HCT116 (cell line): ENCODE measurements at regions of chr5 and their contacts with region 1.

Region 1: GRCh38 chr5:173331956-173332479 is 3.8 kb upstream of the STC2 start:
- DNase-seq: peak; percentile 77
- ATAC-seq: peak; percentile 57
- H3K4me3 ChIP-seq: no peak overlapping the region
- H3K27ac ChIP-seq: peak overlapping the region; percentile 14; the same call in 1 of the 2 replicates
- H3K4me1 ChIP-seq: peaks cover 14 to 44% of the 10 kb centered on the region in 2 experiments; a peak in 3 of 4 replicates
- H3K27me3 ChIP-seq: no peaks in the 10 kb centered on the region
- CTCF ChIP-seq: peak in 2 of 3 experiments; percentile 94 to 98; a peak in 4 of 6 replicates
- POLR2A ChIP-seq: no peak
- RAD21 ChIP-seq: no peak

Region 2: GRCh38 chr5:172984243-172984953 is 347.6 kb before region 1 on chr5:
- CTCF ChIA-PET with region 1: interaction called, 8 read pairs
- POLR2A ChIA-PET with region 1: interaction called, 5 read pairs
- RAD21 ChIA-PET with region 1: no interaction called
- intact Hi-C with region 1: loop called (anchors 2 kb)
- DNase-seq: peak; percentile 45
- ATAC-seq: peak; percentile 67
- H3K4me3 ChIP-seq: peak overlapping the region; percentile 93 to 94
- H3K27ac ChIP-seq: peak overlapping the region; percentile 73
- H3K4me1 ChIP-seq: peaks cover 5 to 14% of the 10 kb centered on the region in 2 experiments; a peak in 2 of 4 replicates
- H3K27me3 ChIP-seq: no peaks in the 10 kb centered on the region
- CTCF ChIP-seq: peak; percentile 45 to 54 (median 51); a peak in 5 of 6 replicates
- POLR2A ChIP-seq: no peak
- RAD21 ChIP-seq: peak; percentile 70

Region 3: GRCh38 chr5:173293817-173294672 is 38.0 kb before region 1 on chr5:
- CTCF ChIA-PET with region 1: interaction called, 113 read pairs
- POLR2A ChIA-PET with region 1: interaction called, 67 read pairs
- RAD21 ChIA-PET with region 1: interaction called, 15 to 27 read pairs
- intact Hi-C with region 1: loop called (anchors 1 kb)
- DNase-seq: peak; percentile 56
- ATAC-seq: peak; percentile 93
- H3K4me3 ChIP-seq: peak overlapping the region; percentile 10 to 27; a peak in 3 of 4 replicates
- H3K27ac ChIP-seq: no peak overlapping the region
- H3K4me1 ChIP-seq: peaks cover 7 to 20% of the 10 kb centered on the region in 2 experiments; a peak in 3 of 4 replicates
- H3K27me3 ChIP-seq: no peaks in the 10 kb centered on the region
- CTCF ChIP-seq: peak; percentile 77 to 97 (median 89)
- POLR2A ChIP-seq: no peak
- RAD21 ChIP-seq: peak; percentile 99

Region 4: GRCh38 chr5:173303878-173304590 is 28.0 kb before region 1 on chr5:
- CTCF ChIA-PET with region 1: interaction called, 6 read pairs
- POLR2A ChIA-PET with region 1: interaction called, 15 read pairs
- RAD21 ChIA-PET with region 1: no interaction called
- intact Hi-C with region 1: no loop called
- DNase-seq: no peak
- ATAC-seq: peak; percentile 30; the same call in 1 of the 2 replicates
- H3K4me3 ChIP-seq: 0 out of 4 replicates have a peak overlapping the region, but pooled peaks of 1 of the 2 experiments have one; percentile 15
- H3K27ac ChIP-seq: peak overlapping the region; percentile 35
- H3K4me1 ChIP-seq: peaks cover 29 to 37% of the 10 kb centered on the region in 2 experiments
- H3K27me3 ChIP-seq: no peaks in the 10 kb centered on the region
- CTCF ChIP-seq: no peak
- POLR2A ChIP-seq: no peak
- RAD21 ChIP-seq: no peak

Region 5: GRCh38 chr5:173315495-173316350 is 16.3 kb before region 1 on chr5:
- CTCF ChIA-PET with region 1: interaction called, 7 read pairs
- POLR2A ChIA-PET with region 1: interaction called, 65 read pairs
- RAD21 ChIA-PET with region 1: no interaction called
- intact Hi-C with region 1: no loop called
- DNase-seq: no peak
- ATAC-seq: no peak
- H3K4me3 ChIP-seq: no peak overlapping the region
- H3K27ac ChIP-seq: no peak overlapping the region
- H3K4me1 ChIP-seq: peaks cover 0 to 6% of the 10 kb centered on the region in 2 experiments; a peak in 1 of 4 replicates
- H3K27me3 ChIP-seq: no peaks in the 10 kb centered on the region
- CTCF ChIP-seq: no peak
- POLR2A ChIP-seq: no peak
- RAD21 ChIP-seq: no peak

Region 6: DNA sequence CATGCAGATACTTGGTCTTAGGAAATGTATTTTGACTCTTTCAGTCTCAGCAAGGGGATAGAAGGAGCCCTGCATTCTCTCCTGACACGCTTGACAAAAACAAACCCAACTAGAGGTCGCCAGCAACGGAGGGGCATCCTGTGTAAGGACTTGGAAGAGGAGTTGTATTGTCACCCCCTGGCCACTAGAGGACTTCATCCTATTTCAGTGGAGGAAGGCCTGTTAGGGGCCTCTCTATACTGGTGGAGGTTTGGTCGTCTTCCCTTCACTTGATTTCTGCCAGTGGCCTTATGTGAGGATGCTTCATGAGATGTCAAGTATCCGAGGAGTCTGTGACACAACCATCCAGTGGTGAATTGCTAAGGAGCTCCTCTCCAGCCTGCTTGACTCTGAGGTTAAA is 119.0 kb after region 1 on chr5:
- CTCF ChIA-PET with region 1: no interaction called
- POLR2A ChIA-PET with region 1: interaction called, 7 read pairs
- RAD21 ChIA-PET with region 1: no interaction called
- intact Hi-C with region 1: loop called (anchors 5 kb)
- DNase-seq: peak; percentile 60
- ATAC-seq: peak; percentile 39
- H3K4me3 ChIP-seq: no peak overlapping the region
- H3K27ac ChIP-seq: no peak overlapping the region
- H3K4me1 ChIP-seq: peaks cover 43 to 56% of the 10 kb centered on the region in 2 experiments
- H3K27me3 ChIP-seq: no peaks in the 10 kb centered on the region
- CTCF ChIP-seq: peak; percentile 57 to 79 (median 78); a peak in 5 of 6 replicates
- POLR2A ChIP-seq: no peak
- RAD21 ChIP-seq: peak; percentile 46

Region 7: DNA sequence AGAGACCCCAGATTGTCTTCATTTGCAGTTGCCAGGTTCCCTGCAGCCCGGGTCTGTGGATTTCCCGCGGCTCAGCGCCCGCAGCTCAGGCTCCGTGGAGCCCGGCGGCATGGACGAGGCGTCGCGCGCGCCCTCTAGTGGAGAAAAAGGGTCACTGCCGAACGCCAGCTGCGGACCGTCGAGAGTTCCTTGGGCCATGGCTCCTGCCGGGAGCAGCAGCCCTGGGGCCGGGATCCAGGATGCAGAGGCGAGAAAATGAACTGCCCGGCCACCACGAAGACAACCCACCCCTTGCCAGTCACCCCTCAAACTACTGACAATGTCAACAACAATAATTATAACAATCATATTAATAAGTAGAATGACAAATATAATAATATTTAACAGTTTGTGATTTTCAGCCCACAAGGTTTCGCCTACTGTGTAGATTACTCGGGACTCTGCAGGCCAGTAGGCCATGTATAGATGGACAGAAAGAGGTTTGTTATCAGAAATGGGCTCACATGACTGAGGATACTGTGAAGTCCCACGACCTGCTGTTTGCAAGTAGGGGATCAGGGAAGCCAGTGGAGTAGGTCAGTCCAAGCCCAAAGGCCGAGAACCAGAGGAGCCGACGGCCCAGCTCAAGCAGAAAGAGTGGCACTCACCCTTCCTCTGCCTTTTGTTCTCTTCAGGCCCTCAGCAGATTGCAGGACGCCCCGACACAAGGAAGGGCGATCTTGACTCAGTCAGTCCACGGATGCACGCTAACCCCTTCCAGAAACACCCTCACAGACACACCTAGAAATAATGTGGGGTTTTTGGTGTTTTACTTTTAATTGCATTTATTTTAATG is 241.3 kb after region 1 on chr5:
- CTCF ChIA-PET with region 1: interaction called, 7 read pairs
- POLR2A ChIA-PET with region 1: no interaction called
- RAD21 ChIA-PET with region 1: no interaction called
- intact Hi-C with region 1: loop called (anchors 2 kb)
- DNase-seq: peak; percentile 22
- ATAC-seq: peak; percentile 99
- H3K4me3 ChIP-seq: peak overlapping the region; percentile 19 to 34; a peak in 3 of 4 replicates
- H3K27ac ChIP-seq: no peak overlapping the region
- H3K4me1 ChIP-seq: peaks cover 0 to 8% of the 10 kb centered on the region in 2 experiments; a peak in 1 of 4 replicates
- H3K27me3 ChIP-seq: no peaks in the 10 kb centered on the region
- CTCF ChIP-seq: peak; percentile 83 to 90 (median 88)
- POLR2A ChIP-seq: no peak
- RAD21 ChIP-seq: peak; percentile 95